Activated naive CD4-positive, alpha-beta T cell treated with anti-CD3 and anti-CD28 coated beads for 36 hours (primary cell): ENCODE measurements at regions of chr10 and their contacts with region 1.

Region 1: GRCh38 chr10:112314822-112315474 is 31.7 kb downstream of the TECTB start:
- DNase-seq: peak; percentile 90
- H3K4me3 Mint-ChIP-seq: no peak overlapping the region
- H3K27ac Mint-ChIP-seq: no peak overlapping the region
- H3K4me1 Mint-ChIP-seq: no peaks in the 10 kb centered on the region
- H3K27me3 Mint-ChIP-seq: peaks cover 25% of the 10 kb centered on the region

Region 2: DNA sequence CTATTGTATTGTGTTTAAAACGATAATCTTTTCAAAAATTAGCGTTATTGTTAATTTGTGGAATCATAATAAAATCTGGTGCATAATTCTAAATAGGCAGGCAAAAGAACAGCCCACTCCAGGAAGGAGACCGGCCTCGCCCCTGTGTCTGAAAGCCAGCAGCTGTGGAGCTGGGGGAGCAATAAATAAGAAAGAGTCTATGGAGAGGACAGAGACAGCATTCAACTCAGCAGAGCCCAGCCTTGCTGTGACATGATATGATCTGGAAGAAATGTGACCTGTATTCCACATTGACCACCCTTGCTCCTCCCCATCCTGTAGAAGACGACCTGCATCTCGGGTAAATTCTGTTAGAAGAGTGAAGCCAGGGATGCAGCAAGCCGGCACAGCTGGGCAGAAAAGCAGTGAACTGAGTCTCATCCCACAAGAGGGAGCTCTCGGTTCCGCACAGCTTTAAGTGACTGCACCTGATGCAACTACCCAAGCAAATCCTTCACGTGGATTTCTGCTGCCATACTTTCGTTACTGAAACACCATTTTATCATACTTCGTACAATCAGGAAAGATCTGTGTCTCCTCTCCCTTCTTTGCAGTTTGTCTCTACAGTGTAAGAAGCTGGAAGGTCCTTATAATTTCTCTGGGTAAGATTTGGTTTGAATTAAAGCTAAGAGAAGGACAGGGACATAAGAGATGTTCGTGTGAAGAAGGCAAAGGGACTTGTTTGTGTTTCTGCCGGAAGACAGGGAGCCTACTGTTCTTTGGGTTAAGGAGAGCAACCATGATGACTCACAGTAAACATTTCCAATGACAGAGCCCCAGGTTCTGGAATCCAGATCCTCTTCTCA is 558.5 kb before region 1 on chr10:
- CTCF ChIA-PET with region 1: no interaction called
- intact Hi-C with region 1: loop called (anchors 10 kb)
- DNase-seq: peak; percentile 33
- H3K4me3 Mint-ChIP-seq: no peak overlapping the region
- H3K27ac Mint-ChIP-seq: no peak overlapping the region
- H3K4me1 Mint-ChIP-seq: no peaks in the 10 kb centered on the region
- H3K27me3 Mint-ChIP-seq: peaks cover 23% of the 10 kb centered on the region

Region 3: DNA sequence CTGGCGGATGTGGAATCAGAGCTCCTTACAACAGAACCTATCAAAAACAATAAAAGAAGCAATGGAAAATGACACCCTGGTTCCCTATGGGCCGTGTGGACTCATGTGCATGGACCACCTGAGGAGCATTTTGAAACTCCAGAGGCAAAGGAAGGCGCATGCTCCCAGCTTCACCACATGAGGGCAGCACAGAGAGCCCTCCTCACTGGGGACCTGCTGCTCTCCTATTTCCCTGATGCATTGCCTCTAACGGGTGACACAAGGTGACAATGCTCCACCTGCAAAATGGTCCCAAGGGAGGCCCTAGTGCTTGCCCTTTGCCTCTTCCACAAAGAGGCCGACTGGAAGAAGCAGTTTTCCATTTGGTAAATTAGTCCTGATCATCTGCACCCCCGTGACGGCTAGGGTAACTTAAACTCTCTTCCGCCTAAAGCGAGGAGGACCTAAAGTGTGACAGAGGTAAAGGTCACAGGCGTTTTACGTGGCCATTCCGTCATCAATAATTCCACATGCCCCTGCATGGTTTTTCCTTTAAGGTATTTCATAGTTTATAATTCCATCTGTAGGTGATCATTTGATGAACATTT is 199.1 kb before region 1 on chr10:
- CTCF ChIA-PET with region 1: interaction called, 3 read pairs
- intact Hi-C with region 1: loop called (anchors 2 kb)
- DNase-seq: peak; percentile 66
- H3K4me3 Mint-ChIP-seq: no peak overlapping the region
- H3K27ac Mint-ChIP-seq: no peak overlapping the region
- H3K4me1 Mint-ChIP-seq: no peaks in the 10 kb centered on the region
- H3K27me3 Mint-ChIP-seq: no peaks in the 10 kb centered on the region

Region 4: DNA sequence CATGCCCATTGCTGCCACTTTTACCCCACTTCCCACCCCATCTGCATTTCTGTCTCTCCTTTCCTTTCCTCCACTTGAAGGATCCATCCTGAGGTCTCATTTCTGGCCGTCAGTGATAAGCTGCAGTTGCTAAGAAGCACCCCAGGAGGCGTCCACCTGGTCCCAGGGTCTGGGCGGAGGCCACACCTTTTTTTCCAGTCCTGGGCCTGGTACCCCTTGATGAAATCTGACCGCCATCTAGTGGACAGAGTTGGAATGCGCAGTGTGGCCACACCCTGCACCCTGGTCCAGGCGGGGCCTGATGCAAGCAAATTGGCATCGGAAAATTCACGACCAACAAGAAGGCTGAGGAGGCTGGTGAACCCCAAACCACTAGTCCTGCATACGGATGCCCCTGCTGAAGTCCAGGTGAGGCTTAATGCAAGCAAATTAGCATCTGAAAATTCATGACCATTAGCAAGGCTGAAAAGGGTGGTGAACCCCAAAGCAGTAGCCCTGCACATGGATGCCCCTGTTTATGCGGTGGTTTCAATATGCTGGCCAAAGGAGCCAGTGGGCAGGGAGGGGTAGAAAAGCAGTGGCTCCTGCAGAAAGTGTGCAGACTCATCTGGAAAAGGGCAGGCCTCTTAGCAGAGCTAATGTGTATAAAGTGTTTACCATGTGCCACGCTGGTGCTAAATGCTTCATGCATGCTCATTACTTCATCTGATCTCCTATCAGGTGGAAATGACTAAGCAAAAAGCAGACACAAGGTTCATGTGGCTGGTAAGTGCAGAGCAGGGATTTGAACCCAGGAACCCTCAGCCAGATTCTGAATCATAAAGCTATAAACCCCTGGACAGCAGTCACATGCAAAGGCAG is 174.6 kb before region 1 on chr10:
- CTCF ChIA-PET with region 1: interaction called, 21 read pairs
- intact Hi-C with region 1: loop called (anchors 1 kb)
- DNase-seq: peak; percentile 87
- H3K4me3 Mint-ChIP-seq: no peak overlapping the region
- H3K27ac Mint-ChIP-seq: peak overlapping the region; percentile 61
- H3K4me1 Mint-ChIP-seq: no peaks in the 10 kb centered on the region
- H3K27me3 Mint-ChIP-seq: peaks cover 4% of the 10 kb centered on the region

Region 5: DNA sequence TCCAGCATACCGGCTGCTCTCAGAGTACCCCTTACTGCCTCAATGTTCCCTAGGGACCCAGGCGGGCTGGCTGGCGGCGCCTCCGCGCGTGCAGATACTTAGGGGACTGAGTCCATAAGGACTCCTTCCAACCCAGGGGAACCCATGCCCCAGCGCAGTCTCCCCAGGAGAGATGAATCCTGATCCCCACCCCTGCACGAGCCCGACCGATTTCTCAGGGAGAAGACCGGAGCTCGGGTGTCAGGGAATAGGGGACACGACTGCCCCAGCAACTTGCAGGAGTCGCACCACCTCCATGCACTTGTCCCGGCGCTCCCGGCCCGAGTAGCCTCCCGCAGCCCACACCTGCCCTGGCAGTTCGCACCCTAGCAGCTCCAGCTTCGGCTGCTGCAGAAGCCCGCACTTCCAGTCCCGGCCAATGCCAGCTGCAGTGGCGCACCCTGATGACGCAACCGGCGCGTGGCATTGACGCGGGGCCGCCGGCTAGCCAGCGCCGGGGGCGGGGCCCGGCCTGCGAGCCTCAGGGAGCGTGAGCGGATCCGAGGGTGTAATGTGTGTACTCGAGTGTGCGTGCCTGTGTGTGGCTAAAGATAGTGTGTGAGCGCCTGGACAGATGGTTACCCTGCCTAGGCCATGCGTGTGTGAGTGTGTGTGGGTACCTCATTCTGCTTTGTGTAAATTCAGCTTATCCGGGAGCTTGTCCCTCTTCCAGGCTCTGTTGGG is 131.5 kb before region 1 on chr10 and contains the start of gene GPAM:
- CTCF ChIA-PET with region 1: interaction called, 14 read pairs
- intact Hi-C with region 1: loop called (anchors 1 kb)
- DNase-seq: peak; percentile 97
- H3K4me3 Mint-ChIP-seq: peak within 1 kb of the TSS; percentile 85
- H3K27ac Mint-ChIP-seq: peak within 1 kb of the TSS; percentile 74
- H3K4me1 Mint-ChIP-seq: peaks cover 20% of the 10 kb centered on the region
- H3K27me3 Mint-ChIP-seq: no peaks in the 10 kb centered on the region
- total RNA-seq, gene GPAM: 7.3 to 8.1 TPM

Region 6: DNA sequence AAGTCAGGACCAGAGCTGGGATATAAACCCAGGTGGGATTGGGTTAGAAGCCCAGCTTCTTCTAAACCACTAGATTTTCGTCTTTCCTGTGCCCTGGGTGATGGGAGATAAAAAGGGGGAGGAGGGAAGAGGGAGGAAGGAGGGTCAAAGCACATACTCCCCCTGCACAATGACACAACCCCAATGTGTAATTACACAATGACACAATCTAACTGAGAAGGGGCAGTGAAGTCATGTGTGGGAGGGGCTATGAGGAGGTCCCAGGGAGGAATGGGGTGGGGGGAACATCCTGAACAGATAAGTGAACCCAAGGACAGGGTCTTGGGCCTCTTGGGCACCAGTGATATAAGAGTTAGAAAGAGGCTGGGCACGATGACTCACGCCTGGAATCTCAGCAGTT is 12.7 kb after region 1 on chr10:
- CTCF ChIA-PET with region 1: interaction called, 15 read pairs
- intact Hi-C with region 1: no loop called
- DNase-seq: no peak
- H3K4me3 Mint-ChIP-seq: no peak overlapping the region
- H3K27ac Mint-ChIP-seq: no peak overlapping the region
- H3K4me1 Mint-ChIP-seq: peaks cover 4% of the 10 kb centered on the region
- H3K27me3 Mint-ChIP-seq: peaks cover 4% of the 10 kb centered on the region

Region 7: DNA sequence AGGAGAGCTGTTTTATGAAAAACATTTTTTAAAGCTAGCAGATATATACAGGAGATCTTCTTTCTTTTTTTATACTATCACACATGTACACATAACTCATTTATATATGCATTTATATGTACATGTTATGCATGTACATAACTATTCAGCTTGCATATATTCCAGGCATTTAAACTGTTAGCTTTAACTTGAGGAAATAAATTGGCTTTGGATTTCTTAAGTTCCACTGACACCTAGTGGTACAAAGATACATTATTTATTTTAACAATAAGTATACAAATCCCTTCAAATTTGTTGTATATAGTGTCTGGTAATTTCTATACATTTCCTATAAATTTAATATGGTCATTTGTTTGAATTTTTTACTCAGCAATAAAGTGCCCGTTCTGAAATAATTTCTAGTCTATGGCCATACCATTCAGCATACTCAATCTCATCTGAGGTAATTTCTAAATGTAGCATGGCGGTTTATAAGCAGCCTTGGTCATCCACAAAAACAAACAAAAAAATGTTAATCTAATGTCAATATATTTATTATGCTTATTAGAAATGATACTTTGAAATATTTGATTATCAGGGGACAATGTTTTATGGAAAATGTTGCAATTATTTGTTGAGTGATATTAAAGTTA is 120.2 kb after region 1 on chr10:
- CTCF ChIA-PET with region 1: interaction called, 5 read pairs
- intact Hi-C with region 1: loop called (anchors 2 kb)
- DNase-seq: no peak
- H3K4me3 Mint-ChIP-seq: no peak overlapping the region
- H3K27ac Mint-ChIP-seq: no peak overlapping the region
- H3K4me1 Mint-ChIP-seq: peaks cover 2% of the 10 kb centered on the region
- H3K27me3 Mint-ChIP-seq: no peaks in the 10 kb centered on the region

Region 8: GRCh38 chr10:112490545-112490944 is 175.6 kb after region 1 on chr10:
- CTCF ChIA-PET with region 1: no interaction called
- intact Hi-C with region 1: no loop called
- DNase-seq: no peak
- H3K4me3 Mint-ChIP-seq: no peak overlapping the region
- H3K27ac Mint-ChIP-seq: no peak overlapping the region
- H3K4me1 Mint-ChIP-seq: peaks cover 5% of the 10 kb centered on the region
- H3K27me3 Mint-ChIP-seq: no peaks in the 10 kb centered on the region